ENCODE measurements at regions of chr6 and their contacts with region 1.

Region 1: GRCh38 chr6:121430514-121431460 is 4.7 kb upstream of the GJA1 start:
- DNase-seq: peak; percentile 20
- H3K4me3 ChIP-seq: no peak overlapping the region
- H3K27ac ChIP-seq: no peak overlapping the region
- H3K27me3 ChIP-seq: no peaks in the 10 kb centered on the region
- CTCF ChIP-seq: peak; percentile 70

Region 2: GRCh38 chr6:121413879-121414278 is 16.9 kb before region 1 on chr6:
- CTCF ChIA-PET with region 1: interaction called, 13 read pairs
- POLR2A ChIA-PET with region 1: no interaction called
- DNase-seq: no peak
- H3K4me3 ChIP-seq: no peak overlapping the region
- H3K27ac ChIP-seq: no peak overlapping the region
- H3K27me3 ChIP-seq: no peaks in the 10 kb centered on the region
- CTCF ChIP-seq: no peak

Region 3: GRCh38 chr6:121555236-121555635 is 124.4 kb after region 1 on chr6:
- CTCF ChIA-PET with region 1: interaction called, 12 read pairs
- POLR2A ChIA-PET with region 1: no interaction called
- DNase-seq: no peak
- H3K4me3 ChIP-seq: no peak overlapping the region
- H3K27ac ChIP-seq: no peak overlapping the region
- H3K27me3 ChIP-seq: no peaks in the 10 kb centered on the region
- CTCF ChIP-seq: no peak

Region 4: GRCh38 chr6:122033539-122034181 is 602.9 kb after region 1 on chr6:
- CTCF ChIA-PET with region 1: interaction called, 64 read pairs
- POLR2A ChIA-PET with region 1: no interaction called
- DNase-seq: peak; percentile 32
- H3K4me3 ChIP-seq: no peak overlapping the region
- H3K27ac ChIP-seq: no peak overlapping the region
- H3K27me3 ChIP-seq: no peaks in the 10 kb centered on the region
- CTCF ChIP-seq: peak; percentile 69

Region 5: DNA sequence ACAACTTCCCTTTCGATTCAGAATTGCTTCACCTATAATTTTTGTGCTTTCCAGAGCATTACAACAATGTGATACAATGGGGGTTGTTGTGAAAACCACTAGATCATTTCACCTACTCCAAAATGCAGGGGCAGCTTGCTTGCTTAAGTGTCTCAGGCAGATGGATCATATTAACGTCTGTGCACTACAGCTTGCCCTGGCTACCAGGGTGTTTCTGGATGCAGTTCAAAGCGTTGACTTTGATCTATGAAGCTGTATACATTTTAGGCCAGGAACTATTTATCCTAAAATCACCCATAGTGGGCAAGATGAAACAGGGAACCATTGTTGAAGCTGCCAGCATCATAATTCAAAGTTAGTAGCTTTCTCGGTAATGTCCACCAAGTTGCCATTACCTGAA is 629.1 kb after region 1 on chr6:
- CTCF ChIA-PET with region 1: interaction called, 15 read pairs
- POLR2A ChIA-PET with region 1: no interaction called
- DNase-seq: no peak
- H3K4me3 ChIP-seq: no peak overlapping the region
- H3K27ac ChIP-seq: no peak overlapping the region
- H3K27me3 ChIP-seq: no peaks in the 10 kb centered on the region
- CTCF ChIP-seq: no peak

Region 6: GRCh38 chr6:122184401-122184827 is 753.6 kb after region 1 on chr6:
- CTCF ChIA-PET with region 1: interaction called, 133 read pairs
- POLR2A ChIA-PET with region 1: no interaction called
- DNase-seq: peak; percentile 11
- H3K4me3 ChIP-seq: peak overlapping the region; percentile 23; the same call in 1 of the 2 replicates
- H3K27ac ChIP-seq: no peak overlapping the region
- H3K27me3 ChIP-seq: no peaks in the 10 kb centered on the region
- CTCF ChIP-seq: peak; percentile 54

Measured in AG04450 (cell line).